B cell (primary cell): ENCODE measurements at regions of chr12 and their contacts with region 1.

Region 1: GRCh38 chr12:131755305-131756113 is 44.6 kb downstream of the SFSWAP start:
- DNase-seq: peak; percentile 80
- ATAC-seq: peak; percentile 77
- H3K4me3 ChIP-seq: no peak overlapping the region
- H3K4me3 Mint-ChIP-seq: no peak overlapping the region
- H3K27ac ChIP-seq: no peak overlapping the region
- H3K27ac Mint-ChIP-seq: no peak overlapping the region
- H3K4me1 ChIP-seq: peaks cover 0 to 5% of the 10 kb centered on the region in 2 donors
- H3K4me1 Mint-ChIP-seq: peaks cover 6% of the 10 kb centered on the region
- H3K27me3 ChIP-seq: no peaks in the 10 kb centered on the region
- H3K27me3 Mint-ChIP-seq: no peaks in the 10 kb centered on the region
- CTCF ChIP-seq: peak; percentile 71

Region 2: DNA sequence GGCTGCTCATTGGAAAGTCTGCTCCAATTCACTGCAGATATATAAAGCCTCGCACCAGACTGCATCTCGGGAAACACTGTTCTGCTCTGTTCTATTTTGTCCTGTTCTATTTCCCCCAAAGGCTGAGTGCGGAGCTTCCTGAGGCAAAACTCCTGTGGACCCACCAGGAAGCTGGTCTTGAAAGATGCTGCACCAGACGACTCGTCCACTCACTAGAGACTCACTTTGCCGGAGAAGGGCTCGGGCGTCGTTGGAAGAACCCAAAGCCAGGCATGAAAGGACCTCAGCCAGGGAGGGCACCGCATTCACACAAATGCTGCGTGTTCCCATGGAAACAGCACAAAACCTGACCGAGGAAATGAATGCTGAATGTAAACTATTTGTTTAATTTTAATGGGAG is 375.8 kb before region 1 on chr12:
- CTCF ChIA-PET with region 1: no interaction called
- POLR2A ChIA-PET with region 1: no interaction called
- intact Hi-C with region 1: no loop called
- DNase-seq: no peak
- ATAC-seq: no peak
- H3K4me3 ChIP-seq: no peak overlapping the region
- H3K4me3 Mint-ChIP-seq: no peak overlapping the region
- H3K27ac ChIP-seq: no peak overlapping the region
- H3K27ac Mint-ChIP-seq: no peak overlapping the region
- H3K4me1 ChIP-seq: no peaks in the 10 kb centered on the region
- H3K4me1 Mint-ChIP-seq: no peaks in the 10 kb centered on the region
- H3K27me3 ChIP-seq: no peaks in the 10 kb centered on the region
- H3K27me3 Mint-ChIP-seq: peaks cover 16% of the 10 kb centered on the region
- CTCF ChIP-seq: no peak

Region 3: GRCh38 chr12:131773582-131774221 is 18.2 kb after region 1 on chr12:
- CTCF ChIA-PET with region 1: interaction called, 11 read pairs
- POLR2A ChIA-PET with region 1: no interaction called
- intact Hi-C with region 1: no loop called
- DNase-seq: peak; percentile 76
- ATAC-seq: peak; percentile 74
- H3K4me3 ChIP-seq: peak overlapping the region in 4 of 5 experiments; percentile 30 to 60 (median 50)
- H3K4me3 Mint-ChIP-seq: peak overlapping the region; percentile 91
- H3K27ac ChIP-seq: peak overlapping the region; percentile 93 to 97
- H3K27ac Mint-ChIP-seq: peak overlapping the region; percentile 97
- H3K4me1 ChIP-seq: peaks cover 62 to 68% of the 10 kb centered on the region in 2 donors
- H3K4me1 Mint-ChIP-seq: peaks cover 78% of the 10 kb centered on the region
- H3K27me3 ChIP-seq: no peaks in the 10 kb centered on the region
- H3K27me3 Mint-ChIP-seq: no peaks in the 10 kb centered on the region
- CTCF ChIP-seq: no peak

Region 4: GRCh38 chr12:131825146-131825892 is 69.8 kb after region 1 on chr12:
- CTCF ChIA-PET with region 1: interaction called, 12 read pairs
- POLR2A ChIA-PET with region 1: no interaction called
- intact Hi-C with region 1: loop called (anchors 1 kb)
- DNase-seq: no peak
- ATAC-seq: no peak
- H3K4me3 ChIP-seq: no peak overlapping the region
- H3K4me3 Mint-ChIP-seq: peak overlapping the region; percentile 26
- H3K27ac ChIP-seq: no peak overlapping the region
- H3K27ac Mint-ChIP-seq: peak overlapping the region; percentile 59
- H3K4me1 ChIP-seq: peaks cover 31 to 46% of the 10 kb centered on the region in 2 donors
- H3K4me1 Mint-ChIP-seq: peaks cover 38% of the 10 kb centered on the region
- H3K27me3 ChIP-seq: peaks cover 0 to 14% (median 4%) of the 10 kb centered on the region in 4 experiments
- H3K27me3 Mint-ChIP-seq: peaks cover 3% of the 10 kb centered on the region
- CTCF ChIP-seq: no peak